ENCODE measurements at regions of chr11 and their contacts with region 1.

Region 1: DNA sequence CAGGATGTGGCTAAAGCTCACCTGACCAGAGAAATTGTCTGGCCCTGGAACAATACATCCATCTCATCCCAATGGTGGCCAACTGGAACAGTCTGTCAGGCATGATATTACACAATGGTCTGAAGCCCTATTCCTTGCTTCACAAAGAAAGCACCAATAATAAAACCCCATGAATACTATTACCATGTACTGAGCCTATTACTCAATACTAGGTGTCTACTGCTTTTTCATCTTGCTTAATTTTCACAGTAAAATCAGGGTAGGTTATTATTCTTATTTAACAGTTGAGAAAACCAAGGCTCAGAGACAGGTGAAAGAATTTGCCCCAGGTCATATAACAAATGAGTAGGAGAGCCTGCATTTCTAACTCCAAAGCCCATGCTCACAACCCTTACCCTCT is 68.9 kb upstream of the CAPRIN1 start:
- DNase-seq: no peak
- H3K4me3 ChIP-seq: no peak overlapping the region
- CTCF ChIP-seq: no peak
- POLR2A ChIP-seq: no peak

Region 2: GRCh38 chr11:33687733-33688479 is 294.8 kb before region 1 on chr11:
- intact Hi-C with region 1: no loop called
- DNase-seq: peak in 1 of 2 donors; percentile 44
- H3K4me3 ChIP-seq: no peak overlapping the region
- CTCF ChIP-seq: no peak
- POLR2A ChIP-seq: no peak

Region 3: DNA sequence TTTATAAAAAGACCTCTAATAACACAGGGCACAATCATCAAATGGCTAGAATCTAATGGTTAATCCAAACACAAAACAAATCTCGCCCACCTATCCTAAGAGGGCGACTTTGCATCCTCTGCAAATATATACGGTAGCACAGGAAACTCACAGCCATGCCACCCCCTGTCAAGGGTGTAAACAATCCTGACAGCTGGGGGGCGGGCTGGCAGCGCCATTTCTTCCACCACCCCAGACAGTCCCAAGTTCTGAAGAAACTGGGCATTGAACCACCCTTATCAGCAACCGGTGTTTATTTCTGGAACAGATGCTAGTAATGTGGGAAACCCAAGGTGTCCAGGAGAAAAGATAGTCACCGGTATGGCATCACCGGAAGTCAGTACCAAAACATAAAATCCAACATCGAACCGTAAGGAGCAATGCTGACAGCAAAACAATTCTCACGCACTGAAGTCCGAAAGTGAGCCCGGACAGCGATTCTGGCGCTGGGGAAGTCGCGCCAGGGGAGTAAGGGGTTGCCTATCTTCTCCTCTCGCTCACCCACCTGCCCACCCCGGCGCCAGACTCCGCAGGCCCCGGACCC is 209.2 kb before region 1 on chr11:
- intact Hi-C with region 1: no loop called
- DNase-seq: no peak
- H3K4me3 ChIP-seq: peak overlapping the region; percentile 92
- CTCF ChIP-seq: no peak
- POLR2A ChIP-seq: no peak

Region 4: DNA sequence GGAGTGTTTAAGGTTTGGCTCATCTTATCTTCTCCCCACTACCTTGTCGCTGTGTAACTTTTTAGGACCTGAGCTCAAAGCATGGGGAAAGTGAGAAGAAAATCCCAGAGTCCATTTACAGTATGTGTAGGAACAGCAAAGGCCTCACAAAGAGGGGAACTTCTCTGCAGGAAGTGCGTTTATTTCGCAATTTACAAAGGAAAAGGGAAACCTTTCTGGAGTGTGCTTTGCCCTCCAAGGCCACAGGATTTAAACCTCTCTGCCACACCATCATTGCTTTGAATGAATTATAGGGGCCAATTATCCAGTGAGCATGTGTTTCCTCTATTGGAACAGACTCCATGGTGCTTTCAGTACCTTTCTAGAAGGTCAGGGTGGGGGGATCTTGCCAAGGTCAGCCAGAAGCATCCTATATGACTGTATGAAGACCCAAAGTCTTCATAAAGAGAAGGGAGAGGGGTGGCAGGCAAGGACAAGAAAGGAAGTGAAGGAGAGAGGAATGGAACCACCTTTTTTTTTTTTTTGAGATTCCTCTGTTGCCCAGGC is 22.7 kb before region 1 on chr11:
- intact Hi-C with region 1: loop called (anchors 1 kb)
- DNase-seq: no peak
- H3K4me3 ChIP-seq: no peak overlapping the region
- CTCF ChIP-seq: no peak
- POLR2A ChIP-seq: no peak

Region 5: DNA sequence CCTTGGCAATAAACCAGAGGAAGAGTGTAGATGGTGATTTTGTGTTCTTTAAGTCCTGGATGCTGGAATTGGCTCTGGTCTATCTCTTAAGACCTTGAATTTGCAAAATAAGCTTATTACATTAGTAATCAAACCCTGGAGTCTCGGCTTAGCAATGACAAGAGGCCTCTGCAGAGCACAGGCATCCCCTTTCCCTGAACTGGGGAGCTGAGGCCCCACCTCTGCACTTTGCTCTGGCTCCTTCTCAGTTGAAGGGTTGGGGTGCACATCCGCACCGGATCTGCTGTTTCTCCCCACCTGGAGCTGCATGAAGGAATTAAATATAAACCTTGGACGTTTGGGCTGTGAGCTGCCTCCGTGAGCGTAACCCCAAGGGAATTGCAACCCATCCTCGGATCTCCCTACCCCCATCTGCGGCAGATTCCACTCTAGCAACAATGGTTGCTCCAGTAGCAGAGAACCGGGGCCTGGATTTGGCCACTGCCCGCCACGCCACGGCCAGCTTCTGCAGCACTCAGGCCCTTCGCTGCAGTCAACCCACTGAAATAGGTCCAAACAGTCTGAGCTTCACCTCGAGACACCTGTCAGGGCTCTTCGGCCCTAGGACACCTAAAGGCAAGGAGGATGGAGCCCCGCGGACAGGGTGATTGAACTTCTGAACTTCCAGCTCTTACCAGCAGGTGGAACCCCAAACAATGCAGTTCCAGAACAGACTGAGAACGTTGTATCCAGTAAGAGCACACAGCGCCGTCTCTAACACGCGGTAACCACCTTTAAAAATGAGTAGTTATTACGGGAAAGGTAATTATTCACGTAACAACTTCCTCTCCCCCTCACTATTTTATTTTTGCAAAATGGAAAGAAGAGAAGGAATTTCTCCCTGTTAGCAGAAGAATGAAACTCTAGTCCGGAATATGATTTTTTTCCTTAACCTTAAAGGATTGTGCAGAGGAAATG is 14.1 kb after region 1 on chr11:
- intact Hi-C with region 1: no loop called
- DNase-seq: peak; percentile 67 to 92
- H3K4me3 ChIP-seq: no peak overlapping the region
- CTCF ChIP-seq: peak in 1 of 3 donors; percentile 75
- POLR2A ChIP-seq: no peak

Measured in lower leg skin (tissue), 4 donors.